ENCODE measurements at regions of chr1 and their contacts with region 1.

Region 1: DNA sequence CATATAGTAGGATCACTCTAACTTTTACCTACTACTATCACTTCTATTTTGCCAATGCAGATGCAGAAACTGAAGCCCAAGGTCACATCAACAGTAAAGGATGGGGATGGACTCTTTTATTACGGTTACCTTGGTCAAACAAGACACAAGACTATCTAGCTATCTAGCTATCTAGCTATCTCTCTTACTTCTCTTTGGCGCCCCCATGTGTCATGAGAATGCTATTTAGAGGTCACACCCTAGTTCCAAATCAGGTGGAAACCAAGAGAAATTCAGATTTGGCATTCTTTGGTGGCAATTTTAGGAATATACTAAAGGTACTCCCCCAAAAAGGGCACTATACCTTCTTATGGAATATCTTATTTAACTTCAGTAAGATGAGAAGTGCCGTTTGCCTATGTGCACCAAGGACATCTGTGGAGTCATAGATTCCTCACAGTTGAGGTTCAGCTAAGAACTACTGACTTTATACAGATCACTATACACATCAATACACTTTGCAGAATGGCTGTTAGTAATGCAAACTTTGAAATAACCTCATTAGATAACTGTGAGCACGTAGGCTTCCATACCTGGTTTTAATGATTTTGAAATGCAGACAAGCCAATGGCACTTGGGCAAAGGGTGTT is 6.7 kb downstream of the ZNF648 start:
- DNase-seq: peak; percentile 13 to 68 (median 60)
- ATAC-seq: no peak
- H3K4me3 ChIP-seq: no peak overlapping the region
- H3K4me3 Mint-ChIP-seq: no peak overlapping the region
- H3K27ac ChIP-seq: no peak overlapping the region
- H3K27ac Mint-ChIP-seq: no peak overlapping the region
- H3K4me1 ChIP-seq: no peaks in the 10 kb centered on the region
- H3K4me1 Mint-ChIP-seq: no peaks in the 10 kb centered on the region
- H3K27me3 ChIP-seq: no peaks in the 10 kb centered on the region
- H3K27me3 Mint-ChIP-seq: peaks cover 19% of the 10 kb centered on the region
- CTCF ChIP-seq: peak; percentile 63

Region 2: DNA sequence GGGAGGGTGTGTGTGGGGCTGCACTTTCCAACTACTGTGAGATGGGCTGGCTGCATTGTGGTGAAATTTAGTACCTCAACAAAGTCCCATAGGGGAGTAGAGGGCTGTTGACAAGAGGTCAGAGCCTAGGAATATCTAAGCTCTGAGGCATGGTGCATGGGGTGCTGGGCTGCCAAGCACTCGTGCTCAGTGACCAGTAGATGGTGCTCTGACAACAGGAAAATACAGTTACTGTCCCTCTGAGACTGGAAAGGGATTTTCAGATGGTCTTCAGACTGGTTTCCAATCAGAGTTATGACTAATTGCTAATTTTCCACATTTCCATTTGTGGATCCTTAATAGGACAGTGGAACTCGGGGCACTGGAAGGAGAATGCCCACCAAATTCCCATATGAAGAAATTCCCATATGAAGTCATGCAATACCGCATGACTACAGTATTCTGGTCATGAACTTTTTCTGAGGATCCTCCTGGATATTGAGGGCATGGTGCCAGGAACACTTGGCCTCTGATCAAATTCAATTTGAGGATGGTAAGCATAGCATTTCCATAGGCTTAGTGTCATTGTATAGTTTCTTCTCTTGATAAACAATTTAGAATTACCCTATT is 575.6 kb before region 1 on chr1:
- CTCF ChIA-PET with region 1: interaction called, 50 read pairs
- POLR2A ChIA-PET with region 1: no interaction called
- intact Hi-C with region 1: loop called in 1 of 2 experiments (anchors 1 kb)
- DNase-seq: peak in 3 of 9 experiments; percentile 13 to 59 (median 47)
- ATAC-seq: peak; percentile 42
- H3K4me3 ChIP-seq: no peak overlapping the region
- H3K4me3 Mint-ChIP-seq: no peak overlapping the region
- H3K27ac ChIP-seq: no peak overlapping the region
- H3K27ac Mint-ChIP-seq: no peak overlapping the region
- H3K4me1 ChIP-seq: peaks cover 4% of the 10 kb centered on the region
- H3K4me1 Mint-ChIP-seq: peaks cover 7% of the 10 kb centered on the region
- H3K27me3 ChIP-seq: peaks cover 4% of the 10 kb centered on the region in 2 experiments
- H3K27me3 Mint-ChIP-seq: peaks cover 38% of the 10 kb centered on the region
- CTCF ChIP-seq: peak; percentile 30

Region 3: GRCh38 chr1:181676269-181676668 is 378.5 kb before region 1 on chr1:
- CTCF ChIA-PET with region 1: no interaction called
- POLR2A ChIA-PET with region 1: no interaction called
- intact Hi-C with region 1: loop called in 1 of 2 experiments (anchors 10 kb)
- DNase-seq: peak in 1 of 9 experiments; percentile 3
- ATAC-seq: no peak
- H3K4me3 ChIP-seq: no peak overlapping the region
- H3K4me3 Mint-ChIP-seq: no peak overlapping the region
- H3K27ac ChIP-seq: no peak overlapping the region
- H3K27ac Mint-ChIP-seq: no peak overlapping the region
- H3K4me1 ChIP-seq: no peaks in the 10 kb centered on the region
- H3K4me1 Mint-ChIP-seq: no peaks in the 10 kb centered on the region
- H3K27me3 ChIP-seq: no peaks in the 10 kb centered on the region
- H3K27me3 Mint-ChIP-seq: peaks cover 37% of the 10 kb centered on the region
- CTCF ChIP-seq: no peak

Region 4: DNA sequence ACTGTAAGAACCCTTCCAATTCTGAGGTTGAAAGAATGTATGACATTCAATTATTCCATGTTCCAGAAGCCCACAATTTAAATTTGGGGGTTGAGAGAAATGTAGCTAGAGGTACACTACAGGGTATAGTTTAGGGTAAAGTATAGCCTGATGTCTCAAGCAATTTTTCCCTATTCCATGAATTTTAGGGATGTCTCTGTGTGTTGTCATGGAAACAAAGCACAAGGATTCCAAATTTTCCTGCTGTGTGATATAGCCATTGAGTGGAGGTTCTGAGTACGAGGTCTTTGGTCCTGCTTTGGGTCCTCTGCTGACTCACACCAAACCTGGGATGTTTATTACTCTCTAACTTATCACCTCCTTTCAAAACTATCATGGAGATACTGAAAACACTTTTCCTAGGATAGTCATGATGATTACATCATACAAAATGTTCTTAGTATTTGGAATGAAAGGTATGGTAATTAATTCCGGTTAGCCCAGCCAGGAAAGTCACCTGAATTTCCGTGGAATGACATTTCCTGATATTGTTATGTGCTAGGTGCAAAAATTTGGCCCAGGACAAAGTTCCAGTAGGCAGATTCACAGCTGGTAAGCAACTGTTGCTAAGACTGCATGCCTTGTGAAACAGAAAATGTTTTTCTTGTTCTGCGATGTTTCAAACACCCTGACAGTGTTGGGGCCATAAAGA is 196.8 kb before region 1 on chr1:
- CTCF ChIA-PET with region 1: no interaction called
- POLR2A ChIA-PET with region 1: no interaction called
- intact Hi-C with region 1: no loop called
- DNase-seq: no peak
- ATAC-seq: no peak
- H3K4me3 ChIP-seq: no peak overlapping the region
- H3K4me3 Mint-ChIP-seq: no peak overlapping the region
- H3K27ac ChIP-seq: no peak overlapping the region
- H3K27ac Mint-ChIP-seq: no peak overlapping the region
- H3K4me1 ChIP-seq: no peaks in the 10 kb centered on the region
- H3K4me1 Mint-ChIP-seq: no peaks in the 10 kb centered on the region
- H3K27me3 ChIP-seq: no peaks in the 10 kb centered on the region
- H3K27me3 Mint-ChIP-seq: peaks cover 3% of the 10 kb centered on the region
- CTCF ChIP-seq: no peak

Region 5: GRCh38 chr1:181998858-181999257 is 56.0 kb before region 1 on chr1:
- CTCF ChIA-PET with region 1: interaction called, 4 read pairs
- POLR2A ChIA-PET with region 1: no interaction called
- intact Hi-C with region 1: loop called in 1 of 2 experiments (anchors 5 kb)
- DNase-seq: no peak
- ATAC-seq: no peak
- H3K4me3 ChIP-seq: no peak overlapping the region
- H3K4me3 Mint-ChIP-seq: no peak overlapping the region
- H3K27ac ChIP-seq: no peak overlapping the region
- H3K27ac Mint-ChIP-seq: no peak overlapping the region
- H3K4me1 ChIP-seq: no peaks in the 10 kb centered on the region
- H3K4me1 Mint-ChIP-seq: no peaks in the 10 kb centered on the region
- H3K27me3 ChIP-seq: peaks cover 0 to 2% of the 10 kb centered on the region in 2 experiments
- H3K27me3 Mint-ChIP-seq: peaks cover 21% of the 10 kb centered on the region
- CTCF ChIP-seq: no peak